ENCODE measurements at regions of chr16 and their contacts with region 1.

Region 1: GRCh38 chr16:1964506-1965395 is at the start of gene RPS2:
- DNase-seq: peak; percentile 89
- H3K4me3 ChIP-seq: peak within 1 kb of the TSS; percentile 92
- CTCF ChIP-seq: no peak

Region 2: DNA sequence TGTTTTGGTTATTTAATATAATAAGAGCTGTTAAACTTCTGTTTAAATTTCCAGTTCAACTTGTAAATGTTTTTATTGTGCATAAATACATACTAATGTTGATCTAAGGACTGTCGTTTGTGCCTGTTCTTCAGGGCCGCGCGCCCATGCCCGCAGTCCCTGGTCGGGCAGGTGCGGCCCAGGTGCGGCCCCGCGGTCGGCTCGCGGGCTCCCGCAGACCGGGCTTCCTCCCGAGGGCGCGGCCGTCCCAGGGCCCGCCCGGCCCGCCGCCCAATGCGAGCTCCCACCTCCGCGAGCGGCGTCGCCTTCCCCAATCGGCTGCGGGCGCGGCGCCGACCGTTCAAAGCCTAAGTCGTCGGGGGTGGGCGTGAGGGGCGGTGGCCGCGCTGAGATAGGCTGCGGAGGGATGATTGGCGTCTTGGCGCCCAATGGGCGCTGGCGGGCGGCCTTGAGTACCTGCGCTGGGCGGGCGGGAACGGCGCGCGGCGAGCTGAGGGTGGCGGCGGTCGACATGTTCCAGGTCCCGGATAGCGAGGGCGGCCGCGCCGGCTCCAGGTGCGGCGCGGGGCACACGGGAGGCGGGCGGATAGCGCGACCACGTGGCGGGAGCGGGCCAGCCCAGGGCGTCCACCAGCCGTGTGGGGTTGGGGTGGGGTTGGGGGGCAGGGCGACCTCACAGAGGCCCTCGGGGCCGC is 286.8 kb before region 1 on chr16 and contains the start of gene JPT2:
- CTCF ChIA-PET with region 1: no interaction called
- POLR2A ChIA-PET with region 1: no interaction called
- DNase-seq: peak; percentile 54
- H3K4me3 ChIP-seq: peak within 1 kb of the TSS; percentile 77
- CTCF ChIP-seq: no peak

Region 3: DNA sequence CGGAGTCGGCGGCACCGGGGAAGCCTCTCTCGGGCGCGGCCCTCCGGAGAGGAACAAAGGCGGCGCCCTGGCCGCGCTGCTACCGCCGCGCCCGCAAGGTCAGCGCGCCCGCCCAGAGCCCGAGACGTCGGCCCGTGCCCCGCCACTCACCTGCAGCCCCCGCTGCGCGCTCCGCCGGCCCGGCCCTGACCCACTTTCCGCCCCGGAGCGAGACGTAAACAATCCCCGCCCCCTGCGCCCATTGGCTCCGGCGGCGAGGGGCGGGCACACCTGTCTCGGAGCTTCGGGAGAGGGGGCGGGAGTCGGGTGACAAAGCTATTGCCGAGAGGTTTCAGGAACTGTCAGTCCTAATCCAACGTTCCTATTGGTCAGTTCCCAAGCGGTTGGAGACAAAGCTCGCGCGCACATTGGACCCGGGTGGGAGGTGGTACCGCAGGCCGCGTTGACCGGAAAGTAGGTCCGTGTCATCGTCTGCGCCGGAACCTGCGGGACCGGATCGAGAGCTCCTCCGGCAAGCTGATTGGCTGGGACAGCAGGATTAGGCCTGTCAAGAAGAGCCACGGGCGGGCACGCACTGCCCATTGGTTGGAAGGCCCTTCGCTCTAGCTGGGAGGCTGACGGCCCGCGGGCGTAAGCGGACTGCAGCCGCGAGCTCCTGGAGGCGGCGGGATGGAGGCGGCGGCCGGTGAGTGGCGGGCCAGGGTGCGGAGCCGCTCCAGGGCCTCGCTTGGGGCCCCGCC is 182.2 kb before region 1 on chr16 and contains the starts of genes NUBP2 and SPSB3:
- CTCF ChIA-PET with region 1: no interaction called
- POLR2A ChIA-PET with region 1: interaction called, 13 read pairs
- DNase-seq: peak; percentile 100
- H3K4me3 ChIP-seq: peak within 1 kb of the TSS; percentile 81
- CTCF ChIP-seq: no peak

Region 4: GRCh38 chr16:1942810-1943726 is 21.7 kb before region 1 on chr16 and contains the start of gene MSRB1:
- CTCF ChIA-PET with region 1: interaction called, 3 read pairs
- POLR2A ChIA-PET with region 1: interaction called, 45 read pairs
- DNase-seq: peak; percentile 65
- H3K4me3 ChIP-seq: peak within 1 kb of the TSS; percentile 87
- CTCF ChIP-seq: no peak

Region 5: DNA sequence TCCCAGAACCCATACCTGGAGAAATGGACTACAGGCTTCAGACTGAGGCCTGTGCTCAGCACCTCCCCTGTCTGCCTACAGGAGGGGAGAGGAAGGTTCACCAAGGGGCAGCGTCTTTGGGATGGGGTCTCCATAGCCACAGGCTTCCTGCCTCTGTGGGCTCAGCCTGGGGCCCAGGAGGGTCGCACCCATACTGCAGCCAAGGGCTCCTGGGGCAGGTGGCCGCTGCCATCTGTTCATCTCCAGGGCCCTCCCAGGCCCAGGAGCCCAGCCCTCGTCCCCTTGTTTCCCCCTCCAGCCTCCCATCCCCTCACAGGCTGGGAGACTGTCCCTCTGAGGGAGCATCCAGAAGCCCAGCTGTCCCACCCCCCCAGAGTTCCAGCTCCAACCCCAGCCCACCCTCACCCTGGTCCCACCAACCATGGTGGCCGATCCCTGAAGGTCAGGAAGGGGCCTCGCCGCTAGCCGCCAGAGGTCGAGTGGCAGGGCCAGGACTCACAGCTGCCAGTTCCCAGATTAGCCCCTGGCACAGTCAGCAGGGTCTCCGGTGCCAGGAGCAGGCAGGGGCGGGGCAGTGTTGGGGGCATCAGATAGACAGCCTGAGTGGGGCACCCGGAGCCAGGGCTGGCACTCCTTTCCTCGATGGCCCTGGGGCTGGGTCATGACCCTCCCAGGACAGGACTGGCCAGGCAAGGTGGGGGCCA is 10.4 kb before region 1 on chr16 and contains the start of gene RPL3L:
- CTCF ChIA-PET with region 1: no interaction called
- POLR2A ChIA-PET with region 1: interaction called, 20 read pairs
- DNase-seq: no peak
- H3K4me3 ChIP-seq: no peak within 1 kb of the TSS
- CTCF ChIP-seq: no peak

Region 6: DNA sequence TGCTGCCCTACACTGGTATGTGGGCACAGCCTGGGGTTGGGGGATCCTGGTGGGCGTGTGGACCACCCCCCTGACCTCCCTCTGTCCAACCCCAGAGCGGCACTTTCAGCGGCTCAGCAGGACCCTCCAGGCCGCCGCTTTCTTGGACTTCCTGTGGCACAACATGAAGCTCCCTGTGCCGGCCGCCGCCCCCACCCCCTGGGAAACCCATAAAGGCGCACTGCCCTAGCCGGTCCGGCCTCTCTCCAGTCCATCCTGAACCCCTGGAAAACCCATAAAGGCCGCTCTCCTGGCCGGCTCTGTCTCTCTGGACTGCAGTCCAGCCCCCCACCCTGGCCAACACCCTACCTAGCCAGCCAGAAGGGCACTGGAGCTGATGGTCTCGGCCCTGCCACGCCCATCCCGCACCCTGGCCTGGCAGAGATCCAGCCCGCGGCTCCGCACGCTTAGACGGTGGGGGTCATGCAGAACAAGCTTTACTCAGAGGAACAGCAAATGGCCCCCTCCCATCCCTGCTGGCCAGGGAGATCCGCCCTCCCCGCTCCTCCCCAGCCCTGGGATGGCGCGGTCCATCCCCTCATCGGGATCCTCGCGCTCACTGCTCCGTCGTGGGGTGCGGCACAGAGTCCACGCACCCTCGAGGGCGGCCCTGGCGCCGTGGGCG is 13.8 kb after region 1 on chr16:
- CTCF ChIA-PET with region 1: no interaction called
- POLR2A ChIA-PET with region 1: interaction called, 23 read pairs
- DNase-seq: no peak
- H3K4me3 ChIP-seq: no peak overlapping the region
- CTCF ChIP-seq: no peak

Region 7: DNA sequence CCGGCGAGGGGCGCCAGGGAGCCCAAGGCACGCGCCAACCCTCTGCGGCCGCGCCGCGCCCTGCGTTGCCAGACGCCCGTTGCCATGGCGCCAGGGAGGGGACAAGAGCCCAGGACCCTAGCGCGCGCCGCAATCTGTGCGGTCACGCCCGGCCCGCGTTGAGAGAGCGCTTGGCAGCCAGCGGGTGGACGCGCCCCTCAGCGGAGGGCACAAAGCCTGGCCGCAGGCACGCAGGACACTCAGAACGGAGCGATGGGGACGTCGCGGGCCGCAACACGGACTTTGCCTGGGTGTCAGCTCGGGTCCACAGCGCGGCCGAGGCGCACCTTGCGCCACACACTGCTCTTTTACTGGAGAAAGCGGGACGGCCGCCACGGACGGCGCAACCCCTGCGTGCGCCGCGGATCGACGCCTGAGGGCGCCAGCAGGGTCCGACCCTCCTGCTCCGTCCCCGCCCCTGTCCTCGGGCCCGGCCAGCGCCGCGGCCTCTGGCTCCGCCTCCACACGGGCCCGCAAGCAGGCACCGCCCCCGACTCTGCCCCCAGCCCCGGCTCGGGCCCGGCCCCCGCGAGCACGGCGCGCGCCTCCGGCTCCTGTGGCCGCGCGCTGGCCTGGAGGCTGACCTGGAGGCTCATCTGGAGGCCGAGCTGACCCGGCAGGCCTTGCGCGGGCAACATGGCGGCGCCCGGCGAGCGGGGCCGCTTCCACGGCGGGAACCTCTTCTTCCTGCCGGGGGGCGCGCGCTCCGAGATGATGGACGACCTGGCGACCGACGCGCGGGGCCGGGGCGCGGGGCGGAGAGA is 19.0 kb after region 1 on chr16 and contains the start of gene GFER:
- CTCF ChIA-PET with region 1: no interaction called
- POLR2A ChIA-PET with region 1: interaction called, 23 read pairs
- DNase-seq: peak; percentile 26
- H3K4me3 ChIP-seq: peak within 1 kb of the TSS; percentile 71
- CTCF ChIP-seq: peak; percentile 66

Region 8: DNA sequence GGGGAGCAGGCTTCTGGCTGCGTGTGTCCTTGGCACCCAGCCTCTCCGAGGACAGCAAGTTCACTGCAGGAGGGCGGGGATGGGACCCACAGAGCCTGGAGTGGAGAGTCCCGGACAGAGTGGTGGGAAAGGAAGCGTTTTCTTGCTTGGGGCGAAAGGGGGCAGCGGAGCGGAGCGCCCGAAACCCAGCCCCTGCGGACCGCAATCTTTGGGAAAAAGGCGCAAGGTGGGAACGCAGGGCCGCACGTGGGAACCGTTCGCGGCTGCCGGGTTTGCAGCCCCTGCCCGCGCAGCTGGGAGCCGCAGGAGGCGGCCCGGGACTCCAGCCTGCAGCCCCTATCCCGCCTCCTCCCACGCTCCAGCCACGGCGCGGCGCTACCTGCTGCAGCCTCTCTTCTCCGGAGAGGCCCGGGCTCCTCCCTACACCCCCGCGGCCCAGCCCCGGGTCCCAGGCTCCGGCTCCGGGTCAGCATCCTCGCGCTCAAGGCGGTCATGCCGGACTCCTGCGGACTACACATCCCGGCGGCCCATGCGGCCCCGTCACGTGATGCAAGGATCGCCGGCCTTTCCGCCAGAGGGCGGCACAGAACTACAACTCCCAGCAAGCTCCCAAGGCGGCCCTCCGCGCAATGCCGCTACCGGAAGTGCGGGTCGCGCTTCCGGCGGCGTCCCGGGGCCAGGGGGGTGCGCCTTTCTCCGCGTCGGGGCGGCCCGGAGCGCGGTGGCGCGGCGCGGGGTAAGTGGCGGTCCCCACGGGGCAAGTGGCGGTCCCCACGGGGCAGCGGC is 82.8 kb after region 1 on chr16 and contains the starts of genes NTHL1 and TSC2:
- CTCF ChIA-PET with region 1: no interaction called
- POLR2A ChIA-PET with region 1: interaction called, 11 read pairs
- DNase-seq: peak; percentile 70
- H3K4me3 ChIP-seq: peak within 1 kb of the TSS; percentile 86
- CTCF ChIP-seq: peak; percentile 48

Region 9: DNA sequence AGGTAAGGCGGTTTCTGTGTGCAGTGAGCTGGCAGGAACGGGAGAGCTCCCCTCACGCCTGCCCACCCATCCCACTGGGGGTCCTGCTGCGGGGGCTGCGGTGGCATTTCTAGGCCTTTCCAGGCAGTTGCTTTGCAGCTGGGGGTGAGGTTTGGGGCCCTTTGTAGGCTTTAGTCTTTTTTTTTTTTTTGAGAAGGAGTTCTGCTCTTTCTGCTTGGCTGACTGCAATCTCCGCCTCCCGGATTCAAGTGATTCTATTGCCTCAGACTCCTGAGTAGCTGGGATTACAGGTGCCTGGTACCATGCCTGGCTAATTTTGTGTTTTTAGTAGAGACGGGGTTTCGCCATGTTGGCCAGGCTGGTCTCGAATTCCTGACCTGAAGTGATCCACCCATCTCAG is 94.1 kb after region 1 on chr16:
- CTCF ChIA-PET with region 1: no interaction called
- POLR2A ChIA-PET with region 1: no interaction called
- DNase-seq: no peak
- H3K4me3 ChIP-seq: no peak overlapping the region
- CTCF ChIP-seq: no peak